ENCODE measurements at regions of chr13 and their contacts with region 1.

Region 1: GRCh38 chr13:26946684-26947343 is 186.2 kb upstream of the GPR12 start:
- DNase-seq: no peak
- H3K4me3 Mint-ChIP-seq: no peak overlapping the region
- H3K27ac Mint-ChIP-seq: no peak overlapping the region
- H3K4me1 Mint-ChIP-seq: no peaks in the 10 kb centered on the region
- H3K27me3 Mint-ChIP-seq: peaks cover 52% of the 10 kb centered on the region
- CTCF ChIP-seq: peak; percentile 22

Region 2: GRCh38 chr13:27283906-27284493 is 337.2 kb after region 1 on chr13:
- CTCF ChIA-PET with region 1: interaction called, 8 read pairs
- intact Hi-C with region 1: loop called (anchors 1 kb)
- DNase-seq: peak; percentile 48
- H3K4me3 Mint-ChIP-seq: no peak overlapping the region
- H3K27ac Mint-ChIP-seq: no peak overlapping the region
- H3K4me1 Mint-ChIP-seq: no peaks in the 10 kb centered on the region
- H3K27me3 Mint-ChIP-seq: no peaks in the 10 kb centered on the region
- CTCF ChIP-seq: no peak

Region 3: DNA sequence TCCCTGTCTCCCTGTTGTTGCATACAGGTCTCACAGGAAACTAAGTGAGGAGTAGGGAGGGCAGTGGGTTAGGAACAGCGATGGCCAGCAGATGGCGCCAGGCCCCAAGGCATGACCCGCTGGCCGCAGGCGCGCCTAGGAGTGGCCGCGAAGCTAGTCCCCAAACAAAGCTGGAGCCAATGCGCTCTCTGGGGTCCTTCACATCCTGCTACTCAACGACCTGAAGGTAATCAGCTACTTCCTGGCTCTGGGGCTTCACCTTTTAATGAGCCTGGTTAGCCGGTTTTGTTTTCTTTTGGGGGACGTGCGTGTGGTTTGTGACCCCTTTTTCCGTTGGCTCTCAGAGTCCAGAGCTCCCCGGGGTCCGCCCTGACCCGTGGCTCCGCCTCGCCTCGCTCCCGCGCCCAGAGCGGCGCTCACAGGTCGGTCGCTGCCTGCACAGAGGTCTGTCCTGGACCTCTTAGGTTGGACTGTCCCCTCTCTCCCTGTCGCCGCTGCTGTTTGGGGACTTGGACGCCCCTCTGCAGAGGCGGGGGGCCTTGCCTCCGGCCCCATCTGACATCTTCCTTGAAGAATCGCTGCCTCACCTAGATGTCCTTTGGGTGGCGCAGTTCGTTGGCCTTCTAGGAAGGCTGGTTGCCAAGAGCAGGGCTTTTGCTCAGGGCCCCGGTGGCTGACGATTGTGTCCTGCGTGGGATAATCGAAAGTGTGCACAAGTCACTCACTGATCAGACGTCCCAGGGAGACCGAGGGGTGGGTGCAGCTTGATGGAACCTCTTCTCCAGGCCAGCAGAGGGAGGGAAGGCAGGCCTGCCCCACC is 415.5 kb after region 1 on chr13:
- CTCF ChIA-PET with region 1: interaction called, 14 read pairs
- intact Hi-C with region 1: loop called (anchors 1 kb)
- DNase-seq: peak; percentile 82
- H3K4me3 Mint-ChIP-seq: peak overlapping the region; percentile 41
- H3K27ac Mint-ChIP-seq: no peak overlapping the region
- H3K4me1 Mint-ChIP-seq: no peaks in the 10 kb centered on the region
- H3K27me3 Mint-ChIP-seq: peaks cover 27% of the 10 kb centered on the region
- CTCF ChIP-seq: peak; percentile 80

Measured in Calu3 (cell line).